PC-3 (cell line): ENCODE measurements at regions of chr17 and their contacts with region 1.

Region 1: DNA sequence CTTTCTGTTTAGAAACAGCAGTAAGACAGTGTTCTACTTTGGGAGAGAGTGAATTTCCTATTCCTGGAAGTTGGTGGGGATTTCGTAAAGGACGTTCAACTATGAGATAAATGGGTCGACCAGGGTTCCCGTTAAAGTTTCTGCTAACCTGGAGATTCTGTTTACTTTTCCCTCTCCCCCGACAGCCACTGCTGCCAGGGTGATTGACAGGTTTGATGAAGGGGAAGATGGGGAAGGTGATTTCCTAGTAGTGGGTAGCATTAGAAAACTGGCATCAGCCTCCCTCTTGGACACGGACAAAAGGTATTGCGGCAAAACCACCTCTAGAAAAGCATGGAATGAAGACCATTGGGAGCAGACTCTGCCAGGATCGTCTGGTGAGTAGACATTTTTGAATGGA is 1.3 kb downstream of the AATF start:
- DNase-seq: no peak
- ATAC-seq: no peak
- H3K4me3 ChIP-seq: peak overlapping the region; percentile 83
- H3K27ac ChIP-seq: no peak overlapping the region
- H3K4me1 ChIP-seq: peaks cover 12% of the 10 kb centered on the region
- H3K27me3 ChIP-seq: peaks cover 24% of the 10 kb centered on the region; the same call in 1 of the 2 replicates
- CTCF ChIP-seq: no peak

Region 2: GRCh38 chr17:36629252-36629847 is 320.7 kb before region 1 on chr17:
- CTCF ChIA-PET with region 1: no interaction called
- POLR2A ChIA-PET with region 1: no interaction called
- intact Hi-C with region 1: loop called (anchors 5 kb)
- DNase-seq: peak; percentile 72
- ATAC-seq: peak; percentile 73
- H3K4me3 ChIP-seq: no peak overlapping the region
- H3K27ac ChIP-seq: no peak overlapping the region
- H3K4me1 ChIP-seq: no peaks in the 10 kb centered on the region
- H3K27me3 ChIP-seq: no peaks in the 10 kb centered on the region
- CTCF ChIP-seq: peak; percentile 86

Region 3: DNA sequence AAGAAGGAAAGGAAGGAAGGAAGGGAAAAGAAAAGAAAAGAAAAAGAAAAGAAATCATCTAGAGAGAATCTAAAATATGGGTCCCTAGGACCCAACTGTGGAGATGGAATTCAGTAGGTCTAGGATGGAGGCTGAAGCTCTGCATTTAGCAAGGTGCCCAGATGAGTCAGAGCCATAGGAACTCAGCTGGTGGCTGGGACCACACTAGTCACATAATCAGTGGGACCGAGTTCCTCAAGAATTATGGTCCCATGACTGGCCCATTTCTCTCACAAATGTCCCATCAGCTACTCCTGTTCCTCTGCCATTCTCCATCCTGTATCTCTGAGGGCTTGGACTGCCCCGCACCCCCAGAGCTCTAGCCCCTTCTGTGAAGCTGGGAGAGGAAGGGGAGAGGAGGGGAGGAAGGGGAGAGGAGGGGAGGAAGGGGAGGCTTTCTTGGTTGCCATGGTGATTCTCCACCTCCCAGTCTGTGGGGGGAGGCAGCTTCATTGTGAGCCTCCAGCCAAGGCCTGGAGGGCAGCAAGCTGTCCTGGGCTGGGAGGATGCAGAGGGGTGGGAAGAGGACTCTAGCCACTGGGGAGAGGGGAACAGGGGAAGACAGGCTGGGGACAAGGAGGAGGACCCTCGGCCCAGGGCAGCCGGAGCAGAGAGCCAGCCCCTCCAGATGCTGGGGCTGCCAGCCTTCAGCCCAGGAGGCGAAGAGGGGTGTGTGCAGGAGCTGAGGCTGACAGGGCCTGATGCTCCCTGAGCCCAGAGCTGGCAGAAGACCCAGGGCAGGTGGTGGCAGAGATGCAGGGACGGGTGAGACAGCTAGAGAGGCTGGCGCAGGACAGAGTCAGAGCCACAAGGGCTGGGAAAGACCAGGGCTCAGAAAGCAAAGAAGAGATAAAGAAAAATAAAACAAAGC is 50.5 kb before region 1 on chr17:
- CTCF ChIA-PET with region 1: no interaction called
- POLR2A ChIA-PET with region 1: no interaction called
- intact Hi-C with region 1: no loop called
- DNase-seq: no peak
- ATAC-seq: no peak
- H3K4me3 ChIP-seq: no peak overlapping the region
- H3K27ac ChIP-seq: no peak overlapping the region
- H3K4me1 ChIP-seq: no peaks in the 10 kb centered on the region
- H3K27me3 ChIP-seq: no peaks in the 10 kb centered on the region
- CTCF ChIP-seq: no peak

Region 4: GRCh38 chr17:37016780-37017179 is 66.8 kb after region 1 on chr17:
- CTCF ChIA-PET with region 1: no interaction called
- POLR2A ChIA-PET with region 1: interaction called, 13 read pairs
- intact Hi-C with region 1: no loop called
- DNase-seq: no peak
- ATAC-seq: no peak
- H3K4me3 ChIP-seq: no peak overlapping the region
- H3K27ac ChIP-seq: no peak overlapping the region
- H3K4me1 ChIP-seq: no peaks in the 10 kb centered on the region
- H3K27me3 ChIP-seq: peaks cover 20% of the 10 kb centered on the region
- CTCF ChIP-seq: no peak

Region 5: GRCh38 chr17:37067555-37068111 is 117.6 kb after region 1 on chr17:
- CTCF ChIA-PET with region 1: no interaction called
- POLR2A ChIA-PET with region 1: no interaction called
- intact Hi-C with region 1: no loop called
- DNase-seq: peak; percentile 87
- ATAC-seq: peak; percentile 98
- H3K4me3 ChIP-seq: no peak overlapping the region
- H3K27ac ChIP-seq: no peak overlapping the region
- H3K4me1 ChIP-seq: peaks cover 11% of the 10 kb centered on the region; the same call in 1 of the 2 replicates
- H3K27me3 ChIP-seq: no peaks in the 10 kb centered on the region
- CTCF ChIP-seq: no peak